ENCODE measurements at regions of chr4 and their contacts with region 1.

Region 1: DNA sequence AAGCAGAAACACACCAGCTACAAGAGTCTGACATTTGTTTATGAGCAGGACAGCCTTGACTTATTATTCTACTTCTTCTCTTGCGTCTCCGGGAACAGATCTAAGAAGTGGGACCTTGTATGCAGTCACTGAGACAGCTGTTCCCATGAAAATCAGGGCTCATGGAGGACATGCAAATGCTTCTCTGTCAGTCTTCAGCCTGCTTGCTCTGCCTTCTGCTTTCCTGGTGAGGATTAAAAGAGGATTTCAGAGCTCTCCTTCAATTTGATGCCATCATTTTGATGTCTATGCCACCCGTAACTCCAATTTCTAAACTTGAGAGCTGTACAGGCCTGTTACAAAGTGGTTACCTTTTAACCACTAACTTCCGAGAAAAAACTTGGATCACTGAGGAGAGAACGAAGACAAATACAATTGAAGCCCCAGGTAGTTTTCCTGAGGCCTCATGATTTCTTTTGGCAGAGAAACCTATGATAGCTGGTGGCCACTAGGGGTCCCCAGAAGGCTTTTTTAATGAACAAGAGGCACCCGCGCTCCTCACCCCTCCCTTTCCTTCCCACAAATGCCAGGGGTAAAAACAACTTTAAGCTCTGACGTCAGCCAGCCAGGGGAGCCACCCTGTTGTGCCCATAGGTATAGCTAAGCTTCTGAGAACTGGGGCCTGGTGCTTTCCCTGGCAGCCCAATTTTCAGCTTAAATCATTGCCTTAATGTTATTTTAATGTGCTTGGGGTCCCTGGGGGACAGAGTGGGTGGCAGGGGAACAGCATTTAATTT is 97.0 kb downstream of the DDIT4L start:
- DNase-seq: peak; percentile 87 to 97 (median 91)
- H3K4me3 ChIP-seq: no peak overlapping the region
- H3K4me3 Mint-ChIP-seq: peak overlapping the region in 4 of 8 donors; percentile 12 to 61 (median 36)
- H3K27ac ChIP-seq: no peak overlapping the region
- H3K27ac Mint-ChIP-seq: peak overlapping the region; percentile 78 to 96 (median 96)
- H3K4me1 ChIP-seq: peaks cover 13% of the 10 kb centered on the region
- H3K4me1 Mint-ChIP-seq: peaks cover 9 to 28% (median 15%) of the 10 kb centered on the region in 4 donors
- H3K27me3 ChIP-seq: no peaks in the 10 kb centered on the region
- H3K27me3 Mint-ChIP-seq: no peaks in the 10 kb centered on the region

Region 2: GRCh38 chr4:98143001-98143899 is 1950.0 kb before region 1 on chr4 and contains the start of gene STPG2:
- CTCF ChIA-PET with region 1: no interaction called
- POLR2A ChIA-PET with region 1: no interaction called
- intact Hi-C with region 1: loop called (anchors 10 kb)
- DNase-seq: peak; percentile 91 to 92 (median 92)
- H3K4me3 ChIP-seq: peak within 1 kb of the TSS; percentile 67 to 69
- H3K4me3 Mint-ChIP-seq: peak within 1 kb of the TSS; percentile 88 to 96 (median 93)
- H3K27ac ChIP-seq: peak within 1 kb of the TSS; percentile 74
- H3K27ac Mint-ChIP-seq: peak within 1 kb of the TSS; percentile 97 to 98 (median 97)
- H3K4me1 ChIP-seq: peaks cover 23% of the 10 kb centered on the region
- H3K4me1 Mint-ChIP-seq: peaks cover 16 to 35% (median 23%) of the 10 kb centered on the region in 4 donors
- H3K27me3 ChIP-seq: no peaks in the 10 kb centered on the region
- H3K27me3 Mint-ChIP-seq: no peaks in the 10 kb centered on the region
- total RNA-seq, gene STPG2: 0.47 to 0.84 TPM

Region 3: GRCh38 chr4:99816545-99817308 is 276.6 kb before region 1 on chr4 and contains the start of gene DAPP1:
- CTCF ChIA-PET with region 1: interaction called, 7 read pairs
- POLR2A ChIA-PET with region 1: no interaction called
- intact Hi-C with region 1: loop called (anchors 10 kb)
- DNase-seq: peak; percentile 82 to 93 (median 87)
- H3K4me3 ChIP-seq: peak within 1 kb of the TSS; percentile 55 to 92
- H3K4me3 Mint-ChIP-seq: peak within 1 kb of the TSS; percentile 89 to 95 (median 91)
- H3K27ac ChIP-seq: peak within 1 kb of the TSS; percentile 69
- H3K27ac Mint-ChIP-seq: peak within 1 kb of the TSS; percentile 91 to 98 (median 97)
- H3K4me1 ChIP-seq: peaks cover 63% of the 10 kb centered on the region
- H3K4me1 Mint-ChIP-seq: peaks cover 44 to 61% (median 54%) of the 10 kb centered on the region in 4 donors
- H3K27me3 ChIP-seq: no peaks in the 10 kb centered on the region
- H3K27me3 Mint-ChIP-seq: no peaks in the 10 kb centered on the region
- total RNA-seq, gene DAPP1: 21.3 to 23.0 TPM

Region 4: GRCh38 chr4:100017637-100018310 is 75.5 kb before region 1 on chr4:
- CTCF ChIA-PET with region 1: no interaction called
- POLR2A ChIA-PET with region 1: no interaction called
- intact Hi-C with region 1: no loop called
- DNase-seq: no peak
- H3K4me3 ChIP-seq: no peak overlapping the region
- H3K4me3 Mint-ChIP-seq: no peak overlapping the region
- H3K27ac ChIP-seq: no peak overlapping the region
- H3K27ac Mint-ChIP-seq: no peak overlapping the region
- H3K4me1 ChIP-seq: no peaks in the 10 kb centered on the region
- H3K4me1 Mint-ChIP-seq: no peaks in the 10 kb centered on the region
- H3K27me3 ChIP-seq: no peaks in the 10 kb centered on the region
- H3K27me3 Mint-ChIP-seq: peaks cover 9 to 14% of the 10 kb centered on the region in 2 donors

Region 5: DNA sequence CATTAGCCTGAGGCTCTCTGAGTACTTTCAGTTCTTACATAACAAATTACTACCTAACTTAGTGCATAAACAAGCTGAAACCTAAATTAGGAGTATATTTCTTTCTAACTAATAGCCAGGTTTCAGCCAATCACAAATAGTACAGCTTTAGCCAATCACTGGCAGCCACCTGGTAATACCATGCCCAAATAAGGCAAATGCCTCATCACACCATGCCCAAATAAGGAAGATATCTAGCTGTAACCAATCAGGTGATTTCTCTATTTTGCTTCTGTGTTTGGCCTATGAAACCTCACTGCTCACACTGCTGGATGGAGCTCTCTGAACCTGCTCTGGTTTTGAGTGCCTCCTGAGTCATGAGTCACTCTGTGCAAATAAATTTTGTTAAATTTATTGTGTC is 16.5 kb before region 1 on chr4:
- CTCF ChIA-PET with region 1: interaction called, 28 read pairs
- POLR2A ChIA-PET with region 1: no interaction called
- intact Hi-C with region 1: no loop called
- DNase-seq: no peak
- H3K4me3 ChIP-seq: no peak overlapping the region
- H3K4me3 Mint-ChIP-seq: no peak overlapping the region
- H3K27ac ChIP-seq: no peak overlapping the region
- H3K27ac Mint-ChIP-seq: no peak overlapping the region
- H3K4me1 ChIP-seq: no peaks in the 10 kb centered on the region
- H3K4me1 Mint-ChIP-seq: peaks cover 0 to 7% (median 3%) of the 10 kb centered on the region in 4 donors
- H3K27me3 ChIP-seq: no peaks in the 10 kb centered on the region
- H3K27me3 Mint-ChIP-seq: peaks cover 5 to 16% of the 10 kb centered on the region in 2 donors

Region 6: DNA sequence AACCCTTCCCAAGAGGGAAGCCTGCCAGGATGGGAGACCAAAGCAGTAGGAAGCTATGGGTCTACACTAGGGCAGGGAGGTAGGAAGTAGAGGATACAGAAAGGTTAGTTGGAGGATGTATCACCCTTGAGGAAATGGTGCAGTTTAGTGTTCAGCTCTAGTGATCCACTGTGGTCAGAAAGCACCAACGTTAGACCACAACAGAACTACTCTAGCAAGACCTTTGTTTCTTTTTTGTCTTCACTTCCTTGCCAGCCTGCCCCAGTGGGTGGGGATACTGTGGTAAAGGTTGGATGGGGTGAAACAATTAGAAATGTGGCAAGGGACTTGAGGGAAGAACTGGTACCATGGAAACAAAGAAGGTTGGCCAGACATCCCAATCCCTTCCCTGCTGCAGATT is 13.7 kb after region 1 on chr4:
- CTCF ChIA-PET with region 1: interaction called, 91 read pairs
- POLR2A ChIA-PET with region 1: interaction called, 7 read pairs
- intact Hi-C with region 1: no loop called
- DNase-seq: peak; percentile 26 to 50 (median 39)
- H3K4me3 ChIP-seq: no peak overlapping the region
- H3K4me3 Mint-ChIP-seq: peak overlapping the region in 2 of 8 donors; percentile 33 to 52
- H3K27ac ChIP-seq: no peak overlapping the region
- H3K27ac Mint-ChIP-seq: peak overlapping the region in 3 of 7 donors; percentile 5 to 80 (median 66)
- H3K4me1 ChIP-seq: peaks cover 9% of the 10 kb centered on the region
- H3K4me1 Mint-ChIP-seq: peaks cover 6 to 12% (median 10%) of the 10 kb centered on the region in 4 donors
- H3K27me3 ChIP-seq: no peaks in the 10 kb centered on the region
- H3K27me3 Mint-ChIP-seq: no peaks in the 10 kb centered on the region

Region 7: GRCh38 chr4:101596781-101597552 is 1503.7 kb after region 1 on chr4:
- CTCF ChIA-PET with region 1: interaction called, 8 read pairs
- POLR2A ChIA-PET with region 1: no interaction called
- intact Hi-C with region 1: loop called (anchors 5 kb)
- DNase-seq: peak in 4 of 5 donors; percentile 22 to 42 (median 33)
- H3K4me3 ChIP-seq: no peak overlapping the region
- H3K4me3 Mint-ChIP-seq: no peak overlapping the region
- H3K27ac ChIP-seq: no peak overlapping the region
- H3K27ac Mint-ChIP-seq: peak overlapping the region in 1 of 7 donors; percentile 4
- H3K4me1 ChIP-seq: no peaks in the 10 kb centered on the region
- H3K4me1 Mint-ChIP-seq: peaks cover 0 to 2% (median 0%) of the 10 kb centered on the region in 4 donors
- H3K27me3 ChIP-seq: no peaks in the 10 kb centered on the region
- H3K27me3 Mint-ChIP-seq: peaks cover 0 to 1% of the 10 kb centered on the region in 2 donors